Colonic mucosa (tissue), 4 donors: ENCODE measurements at regions of chr10 and their contacts with region 1.

Region 1: GRCh38 chr10:112314822-112315474 is 31.7 kb downstream of the TECTB start:
- DNase-seq: peak; percentile 81
- H3K4me3 ChIP-seq: no peak overlapping the region
- H3K27ac ChIP-seq: no peak overlapping the region
- H3K4me1 ChIP-seq: no peaks in the 10 kb centered on the region
- H3K27me3 ChIP-seq: no peaks in the 10 kb centered on the region
- CTCF ChIP-seq: peak; percentile 87

Region 2: DNA sequence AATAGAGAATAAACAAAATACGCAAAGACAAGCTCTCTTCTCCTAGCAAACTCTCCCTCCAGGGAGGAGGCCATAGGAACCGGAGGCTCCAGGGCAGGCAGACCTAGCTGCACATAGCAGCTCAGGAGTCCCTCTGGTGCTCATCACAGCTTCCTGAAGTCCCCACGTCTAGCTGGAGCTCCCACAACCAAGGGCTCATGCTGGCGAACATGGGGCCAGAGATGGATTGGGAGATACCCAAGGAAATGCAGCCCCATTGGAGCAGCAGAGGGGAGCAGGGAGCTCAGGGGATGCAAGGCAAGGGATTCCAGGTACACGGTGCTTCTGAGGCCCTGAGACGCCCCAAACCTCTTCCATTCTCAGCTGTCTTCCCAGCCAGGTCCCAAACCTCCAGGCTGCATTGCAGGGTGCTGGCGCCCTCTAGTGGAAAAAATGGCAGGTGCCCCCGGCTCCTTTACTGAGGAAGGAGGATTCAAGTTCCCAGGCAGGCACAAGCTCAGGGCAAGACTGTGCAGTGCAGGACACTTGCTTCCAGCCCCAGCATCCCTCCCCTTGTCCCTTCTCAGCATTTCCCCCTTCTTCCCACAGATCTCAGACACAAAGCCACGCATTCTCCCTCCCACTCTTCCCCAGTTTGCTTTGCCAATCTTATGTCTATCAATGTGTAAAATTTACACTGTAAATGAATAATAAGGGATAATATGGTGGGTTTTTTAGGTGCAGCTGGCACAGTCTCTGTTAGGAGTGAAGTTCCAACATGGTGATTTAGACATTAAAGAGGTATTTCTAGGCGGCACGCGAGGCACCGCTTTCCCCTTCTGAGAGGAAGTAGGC is 177.6 kb before region 1 on chr10:
- intact Hi-C with region 1: loop called (anchors 10 kb)
- DNase-seq: peak; percentile 77
- H3K4me3 ChIP-seq: no peak overlapping the region
- H3K27ac ChIP-seq: no peak overlapping the region
- H3K4me1 ChIP-seq: no peaks in the 10 kb centered on the region
- H3K27me3 ChIP-seq: no peaks in the 10 kb centered on the region
- CTCF ChIP-seq: peak; percentile 94

Region 3: GRCh38 chr10:112177247-112177646 is 137.7 kb before region 1 on chr10:
- intact Hi-C with region 1: loop called (anchors 10 kb)
- DNase-seq: no peak
- H3K4me3 ChIP-seq: no peak overlapping the region
- H3K27ac ChIP-seq: no peak overlapping the region
- H3K4me1 ChIP-seq: no peaks in the 10 kb centered on the region
- H3K27me3 ChIP-seq: no peaks in the 10 kb centered on the region
- CTCF ChIP-seq: no peak

Region 4: GRCh38 chr10:112278871-112279270 is 36.1 kb before region 1 on chr10:
- intact Hi-C with region 1: no loop called
- DNase-seq: no peak
- H3K4me3 ChIP-seq: no peak overlapping the region
- H3K27ac ChIP-seq: no peak overlapping the region
- H3K4me1 ChIP-seq: no peaks in the 10 kb centered on the region
- H3K27me3 ChIP-seq: no peaks in the 10 kb centered on the region
- CTCF ChIP-seq: no peak

Region 5: GRCh38 chr10:112434988-112435619 is 120.2 kb after region 1 on chr10:
- intact Hi-C with region 1: loop called (anchors 5 kb)
- DNase-seq: no peak
- H3K4me3 ChIP-seq: no peak overlapping the region
- H3K27ac ChIP-seq: no peak overlapping the region
- H3K4me1 ChIP-seq: no peaks in the 10 kb centered on the region
- H3K27me3 ChIP-seq: no peaks in the 10 kb centered on the region
- CTCF ChIP-seq: peak; percentile 38

Region 6: GRCh38 chr10:112613620-112614019 is 298.7 kb after region 1 on chr10:
- intact Hi-C with region 1: no loop called
- DNase-seq: no peak
- H3K4me3 ChIP-seq: no peak overlapping the region
- H3K27ac ChIP-seq: no peak overlapping the region
- H3K4me1 ChIP-seq: no peaks in the 10 kb centered on the region
- H3K27me3 ChIP-seq: no peaks in the 10 kb centered on the region
- CTCF ChIP-seq: no peak